Sciatic nerve (tissue), 2 donors: ENCODE measurements at regions of chr1 and their contacts with region 1.

Region 1: DNA sequence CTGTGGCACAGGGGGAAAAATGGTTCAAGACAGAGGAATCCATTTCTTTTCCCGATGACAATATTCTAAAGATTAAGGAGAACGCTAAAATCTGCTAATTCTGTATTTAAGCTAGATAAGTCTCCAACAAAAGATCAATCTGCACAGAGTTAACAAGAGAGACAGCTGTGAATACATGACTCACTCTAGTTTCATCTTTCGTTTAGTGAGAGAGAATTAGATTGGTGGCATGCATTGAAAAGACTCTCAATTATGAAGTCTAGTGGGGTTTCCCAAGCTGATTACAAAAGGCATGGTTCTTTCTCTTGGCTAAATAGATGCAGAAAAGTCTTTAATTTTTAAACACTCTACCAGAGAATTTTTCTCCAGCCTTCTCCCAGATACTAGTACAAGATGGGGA is 34.4 kb downstream of the CAPN9 start:
- DNase-seq: no peak
- ATAC-seq: no peak

Region 2: DNA sequence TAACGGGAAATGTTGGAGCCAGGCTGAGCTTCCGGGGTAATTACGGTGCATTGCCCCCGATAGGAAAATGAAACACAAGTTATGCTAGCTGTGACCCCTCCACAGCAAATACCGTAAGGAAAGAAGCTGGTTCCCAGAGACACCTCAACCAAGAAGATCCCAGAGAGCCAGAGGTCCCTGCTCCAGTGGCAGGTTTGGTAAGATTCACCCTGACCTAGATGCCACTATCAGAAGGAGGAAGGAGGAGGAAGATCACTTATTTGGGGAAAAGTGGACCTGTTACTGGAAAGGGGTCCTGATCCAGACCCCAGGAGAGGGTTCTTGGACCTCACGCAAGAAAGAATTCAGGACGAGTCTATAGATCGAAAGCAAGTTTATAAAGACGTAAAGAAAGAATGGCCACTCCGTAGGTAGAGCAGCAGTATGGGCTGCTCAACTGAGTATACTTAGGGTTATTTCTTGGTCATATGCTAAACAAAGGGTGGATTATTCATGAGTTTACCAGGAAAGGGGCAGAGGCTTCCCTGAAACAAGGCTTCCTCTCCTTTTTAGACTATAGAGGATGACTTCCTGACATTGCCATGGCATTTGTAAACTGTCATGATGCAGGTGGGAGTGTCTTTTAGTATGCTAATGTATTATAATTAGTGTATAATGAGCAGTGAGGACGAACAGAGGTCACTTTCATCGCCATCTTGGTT is 41.9 kb before region 1 on chr1:
- intact Hi-C with region 1: loop called (anchors 1 kb)
- DNase-seq: no peak
- ATAC-seq: no peak

Region 3: DNA sequence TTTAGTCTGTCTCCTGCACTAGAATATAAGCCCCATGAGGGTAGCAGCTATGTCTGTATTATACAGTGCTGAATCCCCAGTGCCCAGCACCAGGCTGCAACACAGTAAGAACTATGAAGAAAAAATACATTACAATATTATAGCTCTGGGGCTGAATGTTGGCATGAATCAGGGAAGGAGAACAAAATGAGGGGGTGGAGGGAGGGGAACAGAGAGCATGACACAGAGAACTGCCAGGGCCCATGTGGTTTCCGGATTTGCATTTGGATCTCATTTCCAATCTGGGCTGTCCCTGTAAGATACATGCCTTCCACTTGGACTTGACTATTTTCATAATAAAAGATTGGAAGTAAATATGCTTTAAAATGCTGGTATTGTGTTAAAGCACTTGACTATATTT is 50.9 kb after region 1 on chr1:
- intact Hi-C with region 1: no loop called
- DNase-seq: no peak
- ATAC-seq: no peak